Transverse colon (tissue), 4 donors: ENCODE measurements at regions of chr15 and their contacts with region 1.

Region 1: GRCh38 chr15:85831415-85832113 is 36.8 kb upstream of the KLHL25 start:
- DNase-seq: peak; percentile 73
- H3K4me3 ChIP-seq: no peak overlapping the region
- H3K27ac ChIP-seq: peak overlapping the region in 3 of 4 donors; percentile 20 to 43 (median 40)
- H3K4me1 ChIP-seq: peaks cover 0 to 17% (median 6%) of the 10 kb centered on the region in 4 donors
- H3K27me3 ChIP-seq: no peaks in the 10 kb centered on the region
- CTCF ChIP-seq: peak; percentile 47 to 65 (median 58)
- EP300 ChIP-seq: no peak
- POLR2A ChIP-seq: no peak

Region 2: DNA sequence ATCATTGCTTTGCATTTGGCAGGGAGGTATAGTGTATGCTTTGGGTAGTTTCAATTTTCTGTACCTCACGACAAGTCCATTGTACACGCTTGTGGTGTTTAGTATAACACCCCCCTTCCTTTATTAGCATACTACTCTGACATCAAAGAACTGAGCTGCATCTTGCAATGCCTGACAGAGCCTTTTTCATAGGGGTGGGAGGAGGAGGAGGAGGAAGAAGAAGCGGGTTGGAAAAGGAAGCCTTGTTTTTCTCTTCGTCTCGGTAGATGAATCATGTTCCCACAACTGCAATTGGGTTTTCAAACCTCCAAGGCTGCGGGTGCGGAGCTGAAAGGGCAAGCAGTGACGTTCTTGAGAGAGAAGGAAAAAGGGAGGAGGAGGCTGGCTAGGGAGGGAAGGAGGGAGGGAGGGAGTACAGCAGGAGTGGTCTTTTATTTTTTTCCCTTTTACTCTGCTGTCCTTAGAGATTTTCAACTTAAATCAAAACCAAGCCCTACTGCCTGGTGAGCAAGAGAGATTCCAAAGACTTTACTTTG is 212.5 kb before region 1 on chr15:
- in situ Hi-C with region 1: loop called in 1 of 4 experiments (anchors 10 kb)
- intact Hi-C with region 1: no loop called
- DNase-seq: peak; percentile 50
- H3K4me3 ChIP-seq: peak overlapping the region; percentile 8 to 49 (median 23)
- H3K27ac ChIP-seq: peak overlapping the region; percentile 76 to 85 (median 82)
- H3K4me1 ChIP-seq: peaks cover 8 to 86% (median 32%) of the 10 kb centered on the region in 4 donors
- H3K27me3 ChIP-seq: no peaks in the 10 kb centered on the region
- CTCF ChIP-seq: no peak
- EP300 ChIP-seq: no peak
- POLR2A ChIP-seq: peak; percentile 51

Region 3: GRCh38 chr15:85730001-85730820 is 101.4 kb before region 1 on chr15:
- in situ Hi-C with region 1: loop called in 2 of 4 experiments (anchors 5 to 10 kb)
- intact Hi-C with region 1: loop called (anchors 2 kb)
- DNase-seq: no peak
- H3K4me3 ChIP-seq: no peak overlapping the region
- H3K27ac ChIP-seq: peak overlapping the region in 3 of 4 donors; percentile 13 to 41 (median 14)
- H3K4me1 ChIP-seq: peaks cover 6 to 33% (median 17%) of the 10 kb centered on the region in 4 donors
- H3K27me3 ChIP-seq: no peaks in the 10 kb centered on the region
- CTCF ChIP-seq: peak; percentile 69 to 84 (median 73)
- EP300 ChIP-seq: no peak
- POLR2A ChIP-seq: no peak

Region 4: DNA sequence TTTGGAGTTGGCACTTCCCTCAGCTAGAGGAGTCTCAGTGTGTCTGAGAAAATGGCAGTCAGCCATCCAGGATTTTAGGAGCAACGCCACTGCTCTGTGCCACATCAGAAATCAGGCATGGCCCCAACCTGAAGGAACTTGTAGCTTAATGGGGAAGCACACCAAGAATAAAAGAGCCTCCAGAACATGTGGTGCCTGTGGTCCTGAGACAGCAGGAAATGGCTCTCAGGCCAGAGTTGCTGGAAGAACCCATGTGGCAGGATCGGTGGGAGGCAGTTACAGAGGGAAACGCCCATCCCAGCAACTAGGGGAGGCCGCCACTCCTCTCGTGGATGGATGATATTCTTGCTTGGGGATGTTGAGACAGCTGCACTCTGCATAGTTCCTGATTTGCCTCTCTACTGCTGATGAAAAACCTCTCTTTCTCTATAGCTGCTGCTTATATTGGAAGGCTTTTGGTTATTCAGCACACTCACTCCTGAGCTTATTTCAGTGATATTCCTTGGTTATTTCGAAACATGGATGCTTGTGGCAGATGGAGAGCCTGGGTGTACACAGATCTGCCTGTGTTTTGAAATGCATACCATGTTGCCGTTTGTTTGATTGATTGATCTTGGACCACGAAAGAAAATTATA is 89.3 kb before region 1 on chr15:
- in situ Hi-C with region 1: loop called in 3 of 4 experiments (anchors 10 kb)
- intact Hi-C with region 1: no loop called
- DNase-seq: no peak
- H3K4me3 ChIP-seq: no peak overlapping the region
- H3K27ac ChIP-seq: no peak overlapping the region
- H3K4me1 ChIP-seq: no peaks in the 10 kb centered on the region
- H3K27me3 ChIP-seq: no peaks in the 10 kb centered on the region
- CTCF ChIP-seq: no peak
- EP300 ChIP-seq: no peak
- POLR2A ChIP-seq: no peak